ENCODE measurements at regions of chr5 and their contacts with region 1.

Region 1: GRCh38 chr5:170427672-170428236 is 38.6 kb upstream of the KCNMB1 start:
- DNase-seq: no peak
- CTCF ChIP-seq: no peak

Region 2: DNA sequence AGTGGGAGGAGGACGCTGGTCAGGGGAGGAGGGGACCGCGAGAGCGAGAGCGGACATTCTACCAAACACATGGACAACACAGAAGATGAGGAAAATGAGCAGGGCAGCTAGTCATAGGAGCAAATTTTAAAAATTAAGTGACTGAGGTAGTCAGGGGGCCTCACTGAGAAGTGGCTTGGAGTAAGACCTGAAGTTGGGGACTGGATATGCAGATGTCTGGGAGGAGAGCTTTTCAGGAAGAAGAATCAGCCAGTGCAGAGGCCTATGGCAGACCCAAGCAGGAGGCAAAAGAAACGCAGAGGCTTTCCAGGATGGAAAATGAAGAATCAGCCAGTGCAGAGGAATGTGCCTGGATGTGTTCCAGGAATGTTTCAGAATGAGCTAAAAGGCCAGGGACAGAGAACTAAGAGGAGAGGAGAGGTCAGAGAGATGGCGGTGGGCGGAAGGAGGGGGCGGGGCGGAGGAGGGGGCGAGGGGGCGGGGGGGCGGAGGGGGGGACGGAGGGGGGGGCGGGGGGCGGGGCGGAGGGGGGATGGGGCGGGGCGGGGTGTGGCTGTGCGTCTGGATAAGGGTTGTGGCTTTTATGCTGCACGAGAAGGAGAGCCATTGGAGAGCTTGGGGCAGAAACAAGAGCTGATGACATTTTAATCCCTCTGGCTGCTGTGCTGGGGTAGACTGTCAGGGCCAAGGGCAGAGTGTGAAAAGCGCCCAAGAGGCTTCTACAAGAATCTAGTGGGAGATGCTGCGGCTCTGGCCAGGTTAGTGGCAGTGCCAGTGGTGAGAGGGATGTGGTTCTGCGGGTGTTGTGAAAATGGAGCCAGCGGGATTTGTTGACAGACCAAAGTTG is 205.7 kb after region 1 on chr5:
- CTCF ChIA-PET with region 1: interaction called, 135 read pairs
- POLR2A ChIA-PET with region 1: no interaction called
- DNase-seq: no peak
- CTCF ChIP-seq: no peak

Measured in GM10248 (cell line).